Activated naive CD4-positive, alpha-beta T cell treated with anti-CD3 and anti-CD28 coated beads for 36 hours (primary cell): ENCODE measurements at regions of chr11 and their contacts with region 1.

Region 1: GRCh38 chr11:67082035-67082791 is 25.6 kb downstream of the RHOD start:
- DNase-seq: peak; percentile 41
- H3K4me3 Mint-ChIP-seq: peak overlapping the region; percentile 47
- H3K27ac Mint-ChIP-seq: no peak overlapping the region
- H3K4me1 Mint-ChIP-seq: peaks cover 19% of the 10 kb centered on the region
- H3K27me3 Mint-ChIP-seq: peaks cover 4% of the 10 kb centered on the region

Region 2: GRCh38 chr11:67118801-67119584 is 36.8 kb after region 1 on chr11 and contains the start of gene KDM2A:
- CTCF ChIA-PET with region 1: interaction called, 9 read pairs
- intact Hi-C with region 1: loop called (anchors 2 kb)
- DNase-seq: peak; percentile 99
- H3K4me3 Mint-ChIP-seq: peak within 1 kb of the TSS; percentile 97
- H3K27ac Mint-ChIP-seq: peak within 1 kb of the TSS; percentile 92
- H3K4me1 Mint-ChIP-seq: peaks cover 41% of the 10 kb centered on the region
- H3K27me3 Mint-ChIP-seq: no peaks in the 10 kb centered on the region
- total RNA-seq, gene KDM2A: 57.7 to 58.8 TPM

Region 3: DNA sequence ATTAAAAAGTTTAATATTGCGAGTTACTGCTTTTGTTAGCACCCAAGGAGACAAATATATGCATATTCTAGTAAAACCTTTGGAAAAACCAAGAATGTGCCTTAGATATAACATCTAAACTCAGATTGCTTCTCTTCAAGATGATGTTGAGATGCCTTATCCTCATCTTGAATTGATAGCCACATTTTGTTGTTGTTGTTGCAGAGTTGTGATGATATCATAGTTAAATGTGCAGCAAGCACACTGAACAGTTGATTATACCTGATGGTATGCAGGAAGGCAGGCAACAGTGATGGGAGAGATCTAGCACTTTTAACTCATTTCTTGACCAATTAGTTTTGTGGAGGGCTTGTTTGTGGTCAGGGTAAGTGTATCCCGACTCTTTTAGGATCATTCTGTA is 84.9 kb after region 1 on chr11:
- CTCF ChIA-PET with region 1: interaction called, 3 read pairs
- intact Hi-C with region 1: loop called (anchors 1 kb)
- DNase-seq: no peak
- H3K4me3 Mint-ChIP-seq: no peak overlapping the region
- H3K27ac Mint-ChIP-seq: no peak overlapping the region
- H3K4me1 Mint-ChIP-seq: peaks cover 22% of the 10 kb centered on the region
- H3K27me3 Mint-ChIP-seq: no peaks in the 10 kb centered on the region

Region 4: GRCh38 chr11:67382276-67383136 is 300.3 kb after region 1 on chr11:
- CTCF ChIA-PET with region 1: interaction called, 3 read pairs
- intact Hi-C with region 1: loop called (anchors 2 kb)
- DNase-seq: peak; percentile 92
- H3K4me3 Mint-ChIP-seq: no peak overlapping the region
- H3K27ac Mint-ChIP-seq: no peak overlapping the region
- H3K4me1 Mint-ChIP-seq: peaks cover 2% of the 10 kb centered on the region
- H3K27me3 Mint-ChIP-seq: peaks cover 2% of the 10 kb centered on the region